ENCODE measurements at regions of chr1 and their contacts with region 1.

Region 1: GRCh38 chr1:87061742-87062156 is 147.3 kb downstream of the HS2ST1 start:
- DNase-seq: no peak
- ATAC-seq: peak; percentile 18
- H3K4me3 Mint-ChIP-seq: peak overlapping the region; percentile 47
- H3K27ac Mint-ChIP-seq: peak overlapping the region; percentile 90
- H3K4me1 Mint-ChIP-seq: peaks cover 87% of the 10 kb centered on the region
- H3K27me3 Mint-ChIP-seq: no peaks in the 10 kb centered on the region
- CTCF ChIP-seq: no peak

Region 2: DNA sequence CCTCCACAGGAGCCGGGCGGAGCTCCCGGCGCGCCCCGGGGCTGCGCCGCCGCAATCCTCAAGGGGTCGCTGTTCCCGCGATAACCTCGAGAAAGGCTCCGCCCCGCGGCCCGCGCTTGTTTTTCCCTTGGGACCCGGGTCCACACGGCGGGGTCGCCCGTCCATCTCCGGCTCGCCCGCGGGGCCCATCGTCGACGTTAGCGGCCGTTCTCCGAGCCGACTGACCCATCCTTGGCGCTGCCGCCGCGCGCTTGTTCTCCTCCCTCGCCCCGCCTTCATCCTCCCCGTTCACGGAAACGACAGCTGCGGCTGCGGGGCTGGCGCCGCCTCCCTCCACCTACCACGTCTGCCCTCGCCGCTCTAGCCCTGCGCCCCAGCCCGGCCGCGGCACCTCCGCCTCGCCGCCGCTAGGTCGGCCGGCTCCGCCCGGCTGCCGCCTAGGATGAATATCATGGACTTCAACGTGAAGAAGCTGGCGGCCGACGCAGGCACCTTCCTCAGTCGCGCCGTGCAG is 357.2 kb before region 1 on chr1 and contains the start of gene SH3GLB1:
- CTCF ChIA-PET with region 1: no interaction called
- POLR2A ChIA-PET with region 1: interaction called, 7 read pairs
- intact Hi-C with region 1: loop called (anchors 5 kb)
- DNase-seq: peak; percentile 92
- ATAC-seq: peak; percentile 87
- H3K4me3 Mint-ChIP-seq: peak within 1 kb of the TSS; percentile 99
- H3K27ac Mint-ChIP-seq: peak within 1 kb of the TSS; percentile 99
- H3K4me1 Mint-ChIP-seq: peaks cover 46% of the 10 kb centered on the region
- H3K27me3 Mint-ChIP-seq: no peaks in the 10 kb centered on the region
- CTCF ChIP-seq: peak; percentile 26
- total RNA-seq, gene SH3GLB1: 63.8 and 63.9 TPM in 2 replicates

Region 3: DNA sequence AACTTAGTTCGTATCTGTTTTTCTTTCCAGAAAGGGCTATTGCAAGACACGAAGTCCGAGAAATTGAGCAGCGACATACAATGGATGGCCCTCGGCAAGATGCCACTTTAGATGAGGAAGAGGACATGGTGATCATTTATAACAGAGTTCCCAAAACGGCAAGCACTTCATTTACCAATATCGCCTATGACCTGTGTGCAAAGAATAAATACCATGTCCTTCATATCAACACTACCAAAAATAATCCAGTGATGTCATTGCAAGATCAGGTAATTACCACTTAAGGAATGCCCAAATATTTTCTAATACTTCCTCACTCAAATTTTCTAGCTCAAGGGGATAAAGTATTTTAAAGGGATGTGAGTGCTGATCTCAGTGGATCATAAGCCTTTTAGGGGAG is 11.2 kb after region 1 on chr1:
- CTCF ChIA-PET with region 1: no interaction called
- POLR2A ChIA-PET with region 1: interaction called, 3 read pairs
- intact Hi-C with region 1: loop called (anchors 2 kb)
- DNase-seq: no peak
- ATAC-seq: no peak
- H3K4me3 Mint-ChIP-seq: no peak overlapping the region
- H3K27ac Mint-ChIP-seq: no peak overlapping the region
- H3K4me1 Mint-ChIP-seq: peaks cover 6% of the 10 kb centered on the region
- H3K27me3 Mint-ChIP-seq: no peaks in the 10 kb centered on the region
- CTCF ChIP-seq: no peak

Region 4: GRCh38 chr1:87335175-87335884 is 273.6 kb after region 1 on chr1:
- CTCF ChIA-PET with region 1: no interaction called
- POLR2A ChIA-PET with region 1: no interaction called
- intact Hi-C with region 1: loop called (anchors 10 kb)
- DNase-seq: peak; percentile 69
- ATAC-seq: peak; percentile 65
- H3K4me3 Mint-ChIP-seq: peak overlapping the region; percentile 89
- H3K27ac Mint-ChIP-seq: peak overlapping the region; percentile 93
- H3K4me1 Mint-ChIP-seq: peaks cover 62% of the 10 kb centered on the region
- H3K27me3 Mint-ChIP-seq: no peaks in the 10 kb centered on the region
- CTCF ChIP-seq: no peak

Measured in activated B cell treated with CpG ODN at 0.5 μM for 24 hours (primary cell).